T-cell (primary cell): ENCODE measurements at regions of chr9 and their contacts with region 1.

Region 1: DNA sequence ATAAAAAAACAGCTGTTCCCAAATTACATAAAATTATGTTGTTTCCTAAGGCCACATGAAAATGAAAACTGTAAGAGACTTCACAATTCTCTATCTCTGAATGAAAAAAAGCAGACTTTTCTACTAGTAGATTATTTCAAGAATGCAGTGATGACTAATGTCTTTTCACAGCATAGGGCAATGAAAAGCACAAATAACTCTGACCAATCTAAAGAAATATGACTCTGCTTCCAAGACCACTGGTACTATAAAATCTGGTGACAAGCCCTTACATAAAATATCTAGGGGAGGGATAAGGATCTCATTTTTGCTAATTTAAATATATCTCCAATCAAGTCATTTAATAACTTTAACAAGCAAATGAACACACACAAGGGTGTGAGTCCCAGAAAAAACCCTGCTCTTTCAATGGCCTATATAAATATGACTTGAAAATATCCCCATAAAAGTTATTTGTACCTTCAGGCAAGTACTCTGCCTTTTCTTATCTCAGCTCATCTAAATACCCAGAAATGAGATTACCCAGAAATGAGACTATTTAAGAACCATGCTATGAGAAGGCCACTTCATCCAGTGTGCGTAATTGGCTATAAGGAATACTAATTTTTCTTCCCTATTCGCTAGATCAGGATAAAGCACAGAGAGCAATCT is 105.2 kb downstream of the GNAQ start:
- DNase-seq: no peak
- ATAC-seq: no peak
- H3K4me3 ChIP-seq: no peak overlapping the region
- H3K4me3 Mint-ChIP-seq: no peak overlapping the region
- H3K27ac ChIP-seq: no peak overlapping the region
- H3K27ac Mint-ChIP-seq: no peak overlapping the region
- H3K4me1 ChIP-seq: peaks cover 0 to 2% of the 10 kb centered on the region in 2 experiments
- H3K4me1 Mint-ChIP-seq: peaks cover 32 to 38% (median 34%) of the 10 kb centered on the region in 3 donors
- H3K27me3 ChIP-seq: no peaks in the 10 kb centered on the region
- H3K27me3 Mint-ChIP-seq: no peaks in the 10 kb centered on the region

Region 2: DNA sequence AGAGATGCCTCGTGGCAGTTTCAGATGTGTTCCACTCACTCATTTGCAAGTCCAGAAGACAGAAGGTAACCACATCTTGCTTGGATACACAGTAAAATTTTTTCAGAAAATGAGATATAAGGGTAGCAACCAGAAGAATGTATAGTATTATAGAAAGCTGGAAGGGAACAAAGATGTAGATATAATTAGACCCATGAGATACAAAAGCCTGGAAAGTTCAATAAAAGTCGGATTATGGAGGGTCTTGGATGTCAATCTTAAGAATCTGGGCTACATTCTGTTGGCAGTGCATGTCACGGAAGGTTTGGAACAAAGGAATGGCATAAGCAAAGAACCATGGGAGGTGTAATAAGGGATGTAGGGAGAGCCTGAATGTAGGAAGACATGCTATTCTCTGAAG is 304.3 kb after region 1 on chr9:
- CTCF ChIA-PET with region 1: no interaction called
- POLR2A ChIA-PET with region 1: interaction called in 1 of 2 experiments, 13 read pairs
- DNase-seq: no peak
- ATAC-seq: no peak
- H3K4me3 ChIP-seq: no peak overlapping the region
- H3K4me3 Mint-ChIP-seq: no peak overlapping the region
- H3K27ac ChIP-seq: no peak overlapping the region
- H3K27ac Mint-ChIP-seq: no peak overlapping the region
- H3K4me1 ChIP-seq: peaks cover 4 to 5% of the 10 kb centered on the region in 2 experiments
- H3K4me1 Mint-ChIP-seq: peaks cover 0 to 10% (median 1%) of the 10 kb centered on the region in 3 donors
- H3K27me3 ChIP-seq: peaks cover 0 to 4% of the 10 kb centered on the region in 2 experiments
- H3K27me3 Mint-ChIP-seq: peaks cover 5 to 6% of the 10 kb centered on the region in 2 donors